Activated CD4-positive, alpha-beta memory T cell treated with anti-CD3 and anti-CD28 coated beads for 36 hours (primary cell): ENCODE measurements at regions of chr18 and their contacts with region 1.

Region 1: GRCh38 chr18:66582211-66582610 is 21.7 kb downstream of the CDH19 start:
- DNase-seq: no peak
- H3K4me3 Mint-ChIP-seq: no peak overlapping the region
- H3K27ac Mint-ChIP-seq: no peak overlapping the region
- H3K4me1 Mint-ChIP-seq: no peaks in the 10 kb centered on the region
- H3K27me3 Mint-ChIP-seq: no peaks in the 10 kb centered on the region

Region 2: DNA sequence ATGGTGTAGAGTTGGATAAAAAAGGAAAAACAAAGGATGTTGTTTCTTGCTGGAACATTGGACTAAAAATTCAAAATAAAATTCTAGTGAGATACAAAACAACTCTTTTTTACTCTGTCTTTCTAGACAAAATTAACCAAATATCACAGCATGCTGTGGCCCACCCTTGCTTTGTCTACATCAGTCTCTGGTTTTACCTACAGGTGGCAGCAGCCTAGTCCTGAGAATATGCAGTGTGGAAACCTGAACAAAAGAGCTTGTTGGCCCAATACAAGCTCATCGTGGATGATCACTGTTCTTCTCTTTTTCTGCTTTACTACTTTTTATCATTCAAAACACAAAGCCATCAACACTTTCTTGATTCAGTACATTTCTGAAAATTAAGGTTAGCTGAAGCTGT is 188.7 kb before region 1 on chr18:
- CTCF ChIA-PET with region 1: no interaction called
- POLR2A ChIA-PET with region 1: no interaction called
- intact Hi-C with region 1: no loop called
- DNase-seq: no peak
- H3K4me3 Mint-ChIP-seq: no peak overlapping the region
- H3K27ac Mint-ChIP-seq: no peak overlapping the region
- H3K4me1 Mint-ChIP-seq: no peaks in the 10 kb centered on the region
- H3K27me3 Mint-ChIP-seq: no peaks in the 10 kb centered on the region

Region 3: GRCh38 chr18:66632756-66633155 is 50.5 kb after region 1 on chr18:
- CTCF ChIA-PET with region 1: no interaction called
- POLR2A ChIA-PET with region 1: no interaction called
- intact Hi-C with region 1: loop called (anchors 2 kb)
- DNase-seq: no peak
- H3K4me3 Mint-ChIP-seq: no peak overlapping the region
- H3K27ac Mint-ChIP-seq: no peak overlapping the region
- H3K4me1 Mint-ChIP-seq: no peaks in the 10 kb centered on the region
- H3K27me3 Mint-ChIP-seq: no peaks in the 10 kb centered on the region